Sciatic nerve (tissue), 2 donors: ENCODE measurements at regions of chr2 and their contacts with region 1.

Region 1: GRCh38 chr2:133044556-133044955 is 374.6 kb upstream of the LYPD1 start:
- DNase-seq: no peak
- ATAC-seq: no peak

Region 2: GRCh38 chr2:132977812-132978529 is 66.6 kb before region 1 on chr2:
- intact Hi-C with region 1: no loop called
- DNase-seq: no peak
- ATAC-seq: no peak

Region 3: DNA sequence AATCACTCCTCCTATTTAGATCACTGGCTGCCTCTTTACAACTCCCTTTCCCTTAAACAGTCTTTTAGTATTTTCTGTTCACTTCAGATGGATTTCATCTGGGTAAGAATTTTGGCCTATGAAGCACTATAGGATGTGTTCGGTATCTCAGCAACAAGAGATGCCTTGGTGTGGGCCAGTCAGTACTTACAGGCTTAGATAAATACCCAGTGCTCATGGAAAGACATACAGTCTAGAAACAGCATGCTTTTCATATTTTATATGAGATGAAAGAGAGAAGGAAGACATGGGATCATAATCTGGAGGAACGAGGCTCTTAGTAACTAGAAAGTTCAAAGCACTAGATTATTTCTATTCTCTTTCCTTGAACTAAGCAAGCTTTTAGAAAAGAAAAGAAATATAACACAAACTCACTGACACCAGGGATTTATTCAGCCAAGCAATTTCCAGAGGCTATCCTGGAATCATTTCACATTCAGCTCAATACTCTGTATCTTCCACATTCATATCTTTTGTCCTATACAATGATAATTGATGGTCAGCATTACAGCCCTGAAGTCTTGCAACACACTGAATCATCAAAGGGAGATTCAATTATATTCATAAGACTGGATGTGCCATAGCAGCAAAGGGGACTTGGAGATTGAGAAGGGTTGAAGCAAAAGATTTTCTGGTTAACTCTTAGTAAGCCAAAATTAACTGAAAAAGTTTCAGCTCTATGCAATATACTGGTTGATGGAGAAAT is 34.3 kb after region 1 on chr2:
- intact Hi-C with region 1: loop called (anchors 1 kb)
- DNase-seq: no peak
- ATAC-seq: no peak